Adrenal gland (tissue), 19 donors: ENCODE measurements at regions of chr7 and their contacts with region 1.

Region 1: DNA sequence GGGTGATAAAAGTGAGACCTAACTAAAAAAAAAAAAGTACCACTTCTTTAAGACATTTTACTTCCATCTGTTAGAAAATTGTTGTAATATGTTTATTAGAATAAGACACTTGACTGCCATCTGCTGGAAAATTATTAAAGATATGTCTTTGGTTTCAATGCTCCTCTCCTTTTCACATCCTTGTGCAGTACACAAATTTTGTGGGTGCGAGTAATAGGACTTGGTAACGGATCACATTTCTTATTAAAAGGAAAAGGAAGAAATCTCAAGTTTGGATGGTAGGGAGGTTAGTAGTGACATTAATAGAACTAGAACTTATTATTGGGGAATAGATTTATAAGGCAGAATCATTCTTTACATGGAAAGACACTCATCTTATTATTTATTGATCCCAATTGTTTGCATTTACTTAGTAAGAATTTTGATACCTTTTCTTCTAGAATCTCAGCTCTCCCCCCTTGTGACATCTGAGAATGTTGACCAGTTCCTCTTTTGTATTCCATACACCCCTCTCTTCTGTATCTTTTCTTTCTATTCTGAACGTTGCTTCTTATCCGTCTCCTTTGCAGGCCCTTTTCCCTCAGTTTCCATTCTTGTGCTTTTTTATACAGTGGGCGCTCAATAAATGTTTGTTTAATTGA is 43.1 kb upstream of the RPA3 start:
- DNase-seq: no peak
- H3K4me3 ChIP-seq: peak overlapping the region in 1 of 4 donors; percentile 42
- H3K27ac ChIP-seq: peak overlapping the region in 2 of 5 donors; percentile 27 to 61
- H3K4me1 ChIP-seq: peaks cover 6 to 35% of the 10 kb centered on the region in 2 donors
- H3K27me3 ChIP-seq: no peaks in the 10 kb centered on the region
- CTCF ChIP-seq: peak; percentile 43 to 66 (median 58)
- POLR2A ChIP-seq: no peak

Region 2: GRCh38 chr7:7681179-7681935 is 80.1 kb before region 1 on chr7:
- intact Hi-C with region 1: loop called in 1 of 2 experiments (anchors 2 kb)
- DNase-seq: peak in 5 of 7 donors; percentile 32 to 68 (median 62)
- H3K4me3 ChIP-seq: no peak overlapping the region
- H3K27ac ChIP-seq: peak overlapping the region in 1 of 5 donors; percentile 58
- H3K4me1 ChIP-seq: peaks cover 0 to 25% of the 10 kb centered on the region in 2 donors
- H3K27me3 ChIP-seq: no peaks in the 10 kb centered on the region
- CTCF ChIP-seq: peak; percentile 37 to 79 (median 71)
- POLR2A ChIP-seq: no peak

Region 3: DNA sequence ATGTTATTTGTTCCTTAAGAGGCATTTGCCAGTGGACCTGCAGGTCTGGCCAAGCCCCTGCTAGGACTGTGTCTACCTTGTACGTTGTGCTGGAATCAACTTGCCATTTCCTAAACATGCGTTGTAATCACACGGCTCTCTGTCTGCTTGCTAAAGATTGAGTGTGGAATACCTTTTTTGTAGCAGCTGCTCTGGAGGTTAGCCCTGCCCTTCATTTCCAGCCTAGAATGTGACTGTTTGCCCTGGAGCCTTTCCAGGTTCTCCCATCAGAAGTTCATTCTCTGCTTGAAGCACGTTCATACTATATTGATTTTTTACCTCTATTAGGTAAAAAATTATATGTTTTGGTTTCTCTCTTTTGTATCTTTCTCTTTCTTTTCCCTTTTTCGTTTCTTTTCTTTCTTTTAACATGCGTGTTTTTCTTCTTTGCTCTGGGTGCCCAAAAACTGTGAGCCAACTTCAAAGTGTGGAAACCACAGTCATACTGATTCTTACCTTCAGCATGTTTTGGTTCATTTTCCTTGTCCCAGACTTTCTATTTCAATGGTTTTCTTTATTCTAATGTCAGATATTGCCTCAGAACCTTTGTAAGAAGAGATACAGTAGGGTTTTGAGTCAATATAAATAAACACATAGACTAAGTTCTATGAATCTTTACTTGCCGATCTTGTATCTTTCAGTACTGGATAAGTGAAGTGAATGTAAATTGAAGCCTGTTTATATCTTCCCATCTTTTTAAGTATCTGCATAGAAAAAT is 68.8 kb after region 1 on chr7:
- intact Hi-C with region 1: no loop called
- DNase-seq: no peak
- H3K4me3 ChIP-seq: no peak overlapping the region
- H3K27ac ChIP-seq: no peak overlapping the region
- H3K4me1 ChIP-seq: no peaks in the 10 kb centered on the region
- H3K27me3 ChIP-seq: no peaks in the 10 kb centered on the region
- CTCF ChIP-seq: no peak
- POLR2A ChIP-seq: no peak

Region 4: GRCh38 chr7:7868572-7868899 is 107.1 kb after region 1 on chr7:
- intact Hi-C with region 1: no loop called
- DNase-seq: no peak
- H3K4me3 ChIP-seq: no peak overlapping the region
- H3K27ac ChIP-seq: no peak overlapping the region
- H3K4me1 ChIP-seq: no peaks in the 10 kb centered on the region
- H3K27me3 ChIP-seq: no peaks in the 10 kb centered on the region
- CTCF ChIP-seq: no peak
- POLR2A ChIP-seq: no peak

Region 5: GRCh38 chr7:8105449-8106095 is 344.1 kb after region 1 on chr7:
- intact Hi-C with region 1: no loop called
- DNase-seq: no peak
- H3K4me3 ChIP-seq: no peak overlapping the region
- H3K27ac ChIP-seq: no peak overlapping the region
- H3K4me1 ChIP-seq: no peaks in the 10 kb centered on the region
- H3K27me3 ChIP-seq: no peaks in the 10 kb centered on the region
- CTCF ChIP-seq: no peak
- POLR2A ChIP-seq: no peak

Region 6: DNA sequence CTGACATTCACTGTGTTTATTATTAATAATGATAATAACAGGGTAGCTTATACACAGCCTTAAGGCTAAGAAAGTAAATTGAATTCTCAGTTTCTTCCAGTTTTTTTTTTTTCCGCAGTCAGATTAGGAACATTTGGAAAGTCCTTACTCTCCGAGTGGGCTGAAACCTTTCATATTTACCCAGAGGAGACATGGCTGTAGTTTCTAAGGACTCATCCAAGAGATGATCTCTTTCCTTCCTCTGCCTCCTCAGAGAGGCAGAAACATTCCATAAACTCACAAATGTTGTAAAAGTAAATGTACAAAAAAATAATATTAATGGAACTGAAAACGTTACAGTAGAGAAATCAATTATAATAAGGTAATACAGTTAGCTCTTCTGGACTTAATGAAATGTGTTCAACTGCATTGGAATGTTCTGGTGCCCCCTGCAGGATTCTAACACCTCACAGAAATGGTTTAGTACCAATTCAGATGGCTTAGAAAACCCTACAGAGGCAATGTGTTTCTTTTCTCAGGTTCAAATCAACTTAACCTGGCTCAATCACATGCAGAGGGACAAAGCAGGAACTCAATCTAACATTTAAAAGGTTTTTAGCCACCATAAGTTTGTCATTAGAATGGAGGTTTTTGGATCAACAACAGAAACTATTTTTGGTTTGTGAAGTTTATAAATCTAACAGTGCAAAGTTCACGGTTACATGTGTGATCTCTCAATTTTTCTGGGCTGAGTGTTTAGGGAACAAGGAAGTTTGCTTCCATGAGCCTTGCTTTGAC is 428.8 kb after region 1 on chr7:
- intact Hi-C with region 1: loop called in 1 of 2 experiments (anchors 10 kb)
- DNase-seq: peak; percentile 38 to 78 (median 57)
- H3K4me3 ChIP-seq: no peak overlapping the region
- H3K27ac ChIP-seq: no peak overlapping the region
- H3K4me1 ChIP-seq: no peaks in the 10 kb centered on the region
- H3K27me3 ChIP-seq: no peaks in the 10 kb centered on the region
- CTCF ChIP-seq: peak; percentile 51 to 64 (median 58)
- POLR2A ChIP-seq: no peak